Vagina (tissue), 2 donors: ENCODE measurements at regions of chr17 and their contacts with region 1.

Region 1: DNA sequence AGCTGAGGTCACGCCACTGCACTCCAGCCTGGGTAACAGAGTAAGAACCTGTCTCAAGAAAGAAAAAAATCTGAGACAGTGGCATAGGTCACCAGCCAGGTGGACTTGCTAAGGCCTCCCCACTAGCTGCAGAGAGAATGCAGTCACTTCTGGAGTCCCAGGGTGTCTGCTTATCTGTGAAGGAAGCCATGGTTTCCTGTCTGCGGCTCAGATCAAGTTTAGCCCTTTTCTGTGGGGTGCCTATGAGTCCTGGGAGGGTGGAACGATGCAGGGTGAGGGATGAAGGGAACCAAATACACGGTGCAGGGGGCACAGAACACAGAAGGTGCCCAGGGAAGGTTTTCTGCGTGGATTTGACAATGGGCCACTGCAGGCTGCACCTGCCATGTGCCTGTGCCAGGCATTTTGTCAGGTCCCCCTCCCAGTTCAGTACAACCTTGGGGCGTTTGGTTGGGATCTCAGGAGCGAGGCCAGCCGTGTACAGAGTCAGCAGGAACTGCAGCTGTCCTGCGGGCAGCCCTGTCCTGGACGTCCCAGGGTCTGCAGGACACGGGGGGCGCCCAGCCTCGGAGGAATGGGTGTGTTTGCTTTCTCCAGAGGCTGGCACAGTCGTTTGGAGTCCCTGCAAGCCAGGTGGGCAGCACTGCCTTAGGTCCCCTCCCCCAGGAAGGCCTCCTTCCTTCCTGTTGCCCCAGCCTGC is 41.8 kb downstream of the RAB11FIP4 start:
- DNase-seq: no peak
- H3K4me3 ChIP-seq: no peak overlapping the region
- H3K27ac ChIP-seq: no peak overlapping the region
- H3K4me1 ChIP-seq: no peaks in the 10 kb centered on the region
- H3K27me3 ChIP-seq: no peaks in the 10 kb centered on the region
- CTCF ChIP-seq: no peak
- POLR2A ChIP-seq: no peak

Region 2: GRCh38 chr17:31349454-31349853 is 83.8 kb before region 1 on chr17:
- intact Hi-C with region 1: no loop called
- DNase-seq: no peak
- H3K4me3 ChIP-seq: no peak overlapping the region
- H3K27ac ChIP-seq: no peak overlapping the region
- H3K4me1 ChIP-seq: no peaks in the 10 kb centered on the region
- H3K27me3 ChIP-seq: no peaks in the 10 kb centered on the region
- CTCF ChIP-seq: no peak
- POLR2A ChIP-seq: no peak

Region 3: DNA sequence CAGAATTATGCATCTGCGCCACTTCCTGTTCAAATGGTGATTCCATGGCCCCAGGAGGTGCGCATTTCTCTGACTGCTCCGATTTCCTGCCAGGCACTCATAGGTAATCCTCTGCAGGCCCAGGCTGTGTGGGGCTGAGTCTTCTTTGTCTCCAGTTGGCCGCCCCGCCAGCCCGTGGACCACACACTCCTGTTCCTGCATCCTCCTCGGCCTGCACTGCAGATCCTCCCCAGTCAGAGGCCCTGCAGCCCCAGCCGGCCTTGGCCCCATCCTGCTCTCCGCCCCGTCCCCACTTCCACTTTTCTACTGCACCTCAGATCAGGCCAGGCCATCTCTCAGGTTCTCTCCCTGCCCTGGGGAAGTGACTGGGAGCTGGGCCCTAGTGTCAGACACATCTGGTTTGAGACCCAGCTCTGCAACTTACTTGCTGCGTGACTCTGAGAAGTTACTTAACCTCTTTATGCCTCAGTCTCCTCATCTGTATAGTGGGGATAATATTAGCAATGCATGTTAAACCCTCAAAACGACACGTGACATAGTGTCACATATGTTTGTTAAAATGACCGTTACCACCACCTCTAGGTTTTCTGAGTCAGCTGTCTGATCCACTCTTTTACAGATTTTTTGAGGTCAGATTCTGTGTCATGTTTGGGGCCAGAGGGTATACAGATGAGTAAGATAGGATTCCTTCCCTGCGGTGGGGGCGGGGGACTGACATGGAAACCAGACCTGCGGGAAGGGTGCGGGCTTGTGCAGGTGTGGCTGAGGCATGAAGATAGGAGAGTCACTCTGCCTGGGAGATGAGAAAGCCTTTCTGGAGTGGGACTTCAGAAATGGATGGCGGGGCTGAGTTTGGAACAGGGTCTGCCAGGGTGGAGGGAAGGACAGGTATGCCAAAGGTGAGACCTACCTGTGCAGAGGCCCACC is 28.9 kb before region 1 on chr17:
- intact Hi-C with region 1: no loop called
- DNase-seq: no peak
- H3K4me3 ChIP-seq: no peak overlapping the region
- H3K27ac ChIP-seq: no peak overlapping the region
- H3K4me1 ChIP-seq: no peaks in the 10 kb centered on the region
- H3K27me3 ChIP-seq: no peaks in the 10 kb centered on the region
- CTCF ChIP-seq: no peak
- POLR2A ChIP-seq: no peak

Region 4: GRCh38 chr17:31524926-31525800 is 91.9 kb after region 1 on chr17:
- intact Hi-C with region 1: loop called (anchors 5 kb)
- DNase-seq: no peak
- H3K4me3 ChIP-seq: no peak overlapping the region
- H3K27ac ChIP-seq: no peak overlapping the region
- H3K4me1 ChIP-seq: no peaks in the 10 kb centered on the region
- H3K27me3 ChIP-seq: no peaks in the 10 kb centered on the region
- CTCF ChIP-seq: peak; percentile 51 to 78 (median 56)
- POLR2A ChIP-seq: no peak

Region 5: DNA sequence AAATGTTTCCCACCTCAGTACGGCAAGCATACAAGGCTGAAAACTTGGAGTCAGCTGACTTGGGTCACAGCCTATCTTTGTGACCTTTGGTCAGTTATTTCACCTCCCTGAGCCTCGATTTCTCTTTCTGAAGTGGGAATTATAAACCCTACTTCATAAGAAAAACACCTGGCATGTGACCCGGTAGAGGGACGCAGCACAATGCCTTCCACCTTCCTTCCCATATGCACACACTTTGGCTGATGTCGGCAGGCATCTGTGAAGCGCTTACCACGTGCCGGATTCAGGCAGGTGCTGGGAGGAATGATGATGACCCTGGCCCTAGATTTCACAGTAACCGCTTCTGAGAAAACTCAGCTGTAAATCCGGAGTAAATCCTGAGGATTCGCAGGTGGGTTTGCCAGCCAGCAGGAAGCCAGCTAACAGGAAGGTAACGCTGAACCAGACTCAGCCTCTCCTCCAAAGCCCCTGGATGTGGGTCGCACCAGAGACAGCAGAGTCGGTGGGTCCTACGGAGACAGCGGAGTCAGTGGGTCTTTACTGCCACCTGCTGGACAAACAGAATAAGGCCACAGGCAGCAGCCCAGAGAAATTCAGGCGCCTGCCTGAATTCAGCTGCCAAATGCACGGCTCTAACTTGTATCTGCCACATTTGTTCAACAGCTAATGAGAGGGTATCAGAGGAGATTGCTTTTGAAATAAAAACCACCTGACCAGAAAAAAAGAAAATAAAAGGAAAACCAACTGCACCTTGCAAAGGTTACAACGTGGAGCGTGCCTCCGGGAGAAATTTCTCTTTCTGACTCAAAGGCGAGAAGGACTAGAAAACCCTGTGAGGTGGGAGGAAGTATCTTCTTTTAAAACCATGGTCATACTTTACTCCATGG is 409.2 kb after region 1 on chr17:
- intact Hi-C with region 1: loop called (anchors 5 kb)
- DNase-seq: no peak
- H3K4me3 ChIP-seq: peak overlapping the region in 1 of 2 donors; percentile 14
- H3K27ac ChIP-seq: peak overlapping the region; percentile 27
- H3K4me1 ChIP-seq: peaks cover 18% of the 10 kb centered on the region
- H3K27me3 ChIP-seq: no peaks in the 10 kb centered on the region
- CTCF ChIP-seq: peak; percentile 91 to 97 (median 91)
- POLR2A ChIP-seq: no peak

Region 6: DNA sequence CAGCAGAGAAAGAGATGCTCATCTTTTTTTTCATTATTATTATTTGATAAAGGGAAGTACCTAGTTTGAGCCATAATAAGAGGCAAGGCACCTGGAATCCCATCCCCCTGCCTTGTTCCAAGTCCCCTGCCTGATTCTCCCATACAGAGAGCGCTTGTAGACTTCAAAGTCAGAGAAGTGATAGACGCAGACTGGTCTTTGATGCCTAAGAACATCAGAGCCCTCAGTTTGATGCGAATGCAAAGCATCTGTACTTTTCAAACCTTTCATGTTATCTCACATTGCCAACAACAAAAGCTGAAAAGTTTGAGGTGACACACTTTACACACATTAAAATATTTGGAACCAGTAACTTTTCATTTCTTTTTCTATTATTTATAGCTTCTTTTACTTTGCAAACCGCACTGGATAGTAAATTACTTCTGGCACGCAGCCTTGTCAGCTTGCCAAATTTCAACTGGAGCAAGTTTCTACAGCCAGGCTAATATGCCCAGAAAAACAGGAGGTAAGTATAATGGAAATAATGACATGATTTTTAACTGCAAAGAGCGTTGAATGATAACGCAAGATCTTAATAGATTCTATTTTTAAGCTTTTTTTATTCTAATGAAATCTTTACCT is 474.2 kb after region 1 on chr17:
- intact Hi-C with region 1: loop called (anchors 10 kb)
- DNase-seq: no peak
- H3K4me3 ChIP-seq: no peak overlapping the region
- H3K27ac ChIP-seq: no peak overlapping the region
- H3K4me1 ChIP-seq: no peaks in the 10 kb centered on the region
- H3K27me3 ChIP-seq: no peaks in the 10 kb centered on the region
- CTCF ChIP-seq: no peak
- POLR2A ChIP-seq: no peak